ENCODE measurements at regions of chr16 and their contacts with region 1.

Region 1: GRCh38 chr16:3150346-3151218 is 15.8 kb downstream of the ZNF213 start:
- DNase-seq: peak; percentile 98
- ATAC-seq: peak; percentile 74 to 90 (median 83)
- H3K4me3 ChIP-seq: peak overlapping the region; percentile 79
- H3K4me3 Mint-ChIP-seq: peak overlapping the region; percentile 93
- H3K27ac ChIP-seq: peak overlapping the region; percentile 76
- H3K27ac Mint-ChIP-seq: peak overlapping the region; percentile 90 to 94
- H3K4me1 ChIP-seq: peaks cover 36% of the 10 kb centered on the region
- H3K4me1 Mint-ChIP-seq: peaks cover 29 to 37% of the 10 kb centered on the region in 2 donors
- H3K27me3 ChIP-seq: no peaks in the 10 kb centered on the region
- H3K27me3 Mint-ChIP-seq: peaks cover 0 to 5% of the 10 kb centered on the region in 2 donors
- CTCF ChIP-seq: no peak

Region 2: GRCh38 chr16:3074860-3075522 is 75.6 kb before region 1 on chr16:
- intact Hi-C with region 1: loop called (anchors 5 kb)
- DNase-seq: peak; percentile 74 to 93
- ATAC-seq: peak; percentile 75 to 92 (median 86)
- H3K4me3 ChIP-seq: peak overlapping the region; percentile 6
- H3K4me3 Mint-ChIP-seq: peak overlapping the region; percentile 74
- H3K27ac ChIP-seq: peak overlapping the region; percentile 86
- H3K27ac Mint-ChIP-seq: peak overlapping the region; percentile 91 to 97
- H3K4me1 ChIP-seq: peaks cover 86% of the 10 kb centered on the region
- H3K4me1 Mint-ChIP-seq: peaks cover 85 to 90% of the 10 kb centered on the region in 2 donors
- H3K27me3 ChIP-seq: no peaks in the 10 kb centered on the region
- H3K27me3 Mint-ChIP-seq: no peaks in the 10 kb centered on the region
- CTCF ChIP-seq: no peak

Region 3: GRCh38 chr16:3134564-3135417 is 15.8 kb before region 1 on chr16 and contains the start of gene ZNF213:
- intact Hi-C with region 1: loop called (anchors 2 kb)
- DNase-seq: peak; percentile 87 to 98
- ATAC-seq: peak; percentile 96 to 98 (median 96)
- H3K4me3 ChIP-seq: peak within 1 kb of the TSS; percentile 94
- H3K4me3 Mint-ChIP-seq: peak within 1 kb of the TSS; percentile 95
- H3K27ac ChIP-seq: peak within 1 kb of the TSS; percentile 95
- H3K27ac Mint-ChIP-seq: peak within 1 kb of the TSS; percentile 96
- H3K4me1 ChIP-seq: peaks cover 19% of the 10 kb centered on the region
- H3K4me1 Mint-ChIP-seq: peaks cover 19 to 33% of the 10 kb centered on the region in 2 donors
- H3K27me3 ChIP-seq: no peaks in the 10 kb centered on the region
- H3K27me3 Mint-ChIP-seq: no peaks in the 10 kb centered on the region
- CTCF ChIP-seq: no peak
- total RNA-seq, gene ZNF213: 4.8 to 6.8 (median 5.1) TPM